ENCODE measurements at regions of chr12 and their contacts with region 1.

Region 1: DNA sequence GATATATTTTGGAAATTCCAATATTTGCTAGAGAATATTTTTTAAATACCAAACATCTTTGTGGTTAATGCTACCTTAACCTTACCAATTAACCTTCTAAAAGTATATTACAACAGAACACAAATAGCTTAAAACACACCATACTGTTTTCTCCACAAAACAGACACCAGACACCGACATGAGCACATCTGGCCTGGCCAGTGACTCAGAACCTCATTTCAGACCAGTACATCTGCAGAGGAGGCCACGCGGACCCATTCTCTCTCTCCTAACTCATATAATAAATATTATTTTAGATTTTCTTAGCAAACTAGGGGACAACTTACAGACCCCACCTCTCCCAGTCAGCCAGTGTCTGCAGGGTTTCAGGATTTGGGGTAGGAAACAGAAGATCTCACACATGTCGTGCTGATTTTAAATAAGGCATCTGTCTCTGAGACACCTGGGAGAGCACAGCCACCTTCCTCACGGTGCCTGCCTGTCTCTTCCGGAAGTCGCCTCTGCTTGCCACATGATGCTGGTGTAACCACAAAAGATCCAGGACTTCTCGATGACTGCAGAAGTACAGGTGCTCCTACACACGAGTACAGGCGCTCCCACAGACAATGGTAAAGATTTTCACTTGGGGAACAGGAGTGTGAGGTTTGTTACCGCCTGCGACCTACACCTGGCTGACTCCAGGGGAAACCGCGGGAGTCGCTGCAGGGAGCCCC is 9.7 kb upstream of the ANKLE2 start:
- DNase-seq: peak; percentile 62
- ATAC-seq: peak; percentile 64
- H3K4me3 Mint-ChIP-seq: peak overlapping the region; percentile 32
- H3K27ac Mint-ChIP-seq: peak overlapping the region; percentile 78
- H3K4me1 Mint-ChIP-seq: peaks cover 52% of the 10 kb centered on the region
- H3K27me3 Mint-ChIP-seq: no peaks in the 10 kb centered on the region
- CTCF ChIP-seq: no peak

Region 2: DNA sequence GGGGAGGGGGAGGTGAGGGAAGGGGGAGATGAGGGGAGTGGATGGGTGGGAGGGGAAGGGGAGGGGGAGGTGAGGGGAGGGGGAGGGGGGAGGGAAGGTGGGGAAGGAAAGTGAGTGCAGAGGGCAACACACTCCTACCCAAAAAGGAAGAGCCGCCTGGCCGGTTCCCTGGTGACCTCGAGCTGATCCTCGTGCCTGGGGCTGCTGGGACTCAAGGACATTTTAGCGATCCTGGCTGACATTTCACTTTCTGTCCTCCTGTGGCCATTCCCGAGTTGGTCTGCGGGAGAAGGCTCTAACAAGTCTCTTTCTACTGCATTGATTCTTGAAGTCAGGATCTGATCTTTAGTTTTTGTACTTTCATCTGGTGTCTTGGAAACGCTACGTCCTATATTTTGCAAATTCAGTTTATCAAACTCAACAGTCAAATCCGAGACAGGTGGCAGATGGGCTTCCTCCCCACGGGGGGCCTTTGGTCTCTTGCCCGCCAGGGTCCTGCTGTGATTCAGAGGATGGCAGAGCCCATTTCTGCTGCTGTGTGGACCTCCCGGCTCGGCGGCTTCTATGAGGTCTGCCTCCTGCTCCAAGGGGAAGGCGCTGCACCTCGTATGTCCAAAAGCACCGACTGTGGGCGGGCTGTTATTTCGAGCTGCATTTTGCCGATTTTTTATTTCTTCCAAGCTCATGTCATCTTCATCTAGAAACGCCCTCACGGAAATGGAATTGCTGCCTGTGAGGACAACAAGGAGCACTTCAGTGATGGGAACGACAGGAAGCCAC is 41.6 kb before region 1 on chr12:
- CTCF ChIA-PET with region 1: no interaction called
- POLR2A ChIA-PET with region 1: no interaction called
- intact Hi-C with region 1: no loop called
- DNase-seq: no peak
- ATAC-seq: no peak
- H3K4me3 Mint-ChIP-seq: no peak overlapping the region
- H3K27ac Mint-ChIP-seq: no peak overlapping the region
- H3K4me1 Mint-ChIP-seq: no peaks in the 10 kb centered on the region
- H3K27me3 Mint-ChIP-seq: no peaks in the 10 kb centered on the region
- CTCF ChIP-seq: no peak

Region 3: DNA sequence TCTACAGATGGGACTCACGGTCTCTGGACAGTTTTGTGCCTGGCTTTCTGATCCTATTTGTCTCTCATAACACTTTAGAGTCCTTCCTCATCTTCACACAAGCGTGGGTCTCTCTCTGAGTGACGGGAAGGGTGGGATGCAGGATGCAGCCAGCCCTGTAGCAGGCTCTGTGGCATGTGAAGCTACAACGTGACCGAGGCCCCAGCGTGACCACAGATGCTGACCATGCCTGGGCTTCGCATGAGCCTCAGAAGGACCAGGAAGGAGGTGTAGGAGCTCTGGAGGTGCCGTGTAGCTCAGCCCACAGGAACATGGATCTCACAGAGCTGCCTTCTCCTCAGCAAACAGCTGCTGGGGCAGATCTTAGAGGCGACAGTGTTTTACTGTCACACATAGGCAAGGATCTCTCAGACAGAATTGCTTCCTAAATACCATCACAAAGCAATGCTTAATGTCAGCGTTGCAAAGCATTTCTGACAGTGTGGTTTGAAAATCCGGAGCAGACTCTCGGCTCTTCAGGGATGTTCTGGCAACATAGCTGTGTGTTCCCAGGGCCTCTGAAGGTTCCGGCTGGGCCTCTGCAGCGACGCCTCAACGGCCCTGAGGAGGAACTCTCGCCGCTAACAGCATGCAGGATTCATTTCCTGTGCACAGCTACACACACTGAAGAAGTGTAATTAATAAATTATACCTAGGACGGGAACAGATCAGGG is 31.5 kb before region 1 on chr12:
- CTCF ChIA-PET with region 1: no interaction called
- POLR2A ChIA-PET with region 1: no interaction called
- intact Hi-C with region 1: no loop called
- DNase-seq: no peak
- ATAC-seq: no peak
- H3K4me3 Mint-ChIP-seq: no peak overlapping the region
- H3K27ac Mint-ChIP-seq: peak overlapping the region; percentile 24
- H3K4me1 Mint-ChIP-seq: peaks cover 5% of the 10 kb centered on the region
- H3K27me3 Mint-ChIP-seq: no peaks in the 10 kb centered on the region
- CTCF ChIP-seq: no peak

Region 4: GRCh38 chr12:132761032-132761920 is 10.0 kb before region 1 on chr12 and contains the start of gene ANKLE2:
- CTCF ChIA-PET with region 1: interaction called, 8 read pairs
- POLR2A ChIA-PET with region 1: interaction called, 12 read pairs
- intact Hi-C with region 1: no loop called
- DNase-seq: peak; percentile 86
- ATAC-seq: peak; percentile 49
- H3K4me3 Mint-ChIP-seq: peak within 1 kb of the TSS; percentile 90
- H3K27ac Mint-ChIP-seq: peak within 1 kb of the TSS; percentile 99
- H3K4me1 Mint-ChIP-seq: peaks cover 25% of the 10 kb centered on the region
- H3K27me3 Mint-ChIP-seq: no peaks in the 10 kb centered on the region
- CTCF ChIP-seq: no peak
- total RNA-seq, gene ANKLE2: 103 to 108 TPM

Region 5: GRCh38 chr12:132807295-132808092 is 36.2 kb after region 1 on chr12:
- CTCF ChIA-PET with region 1: interaction called, 15 read pairs
- POLR2A ChIA-PET with region 1: no interaction called
- intact Hi-C with region 1: no loop called
- DNase-seq: no peak
- ATAC-seq: peak; percentile 24
- H3K4me3 Mint-ChIP-seq: no peak overlapping the region
- H3K27ac Mint-ChIP-seq: peak overlapping the region; percentile 46
- H3K4me1 Mint-ChIP-seq: peaks cover 41% of the 10 kb centered on the region
- H3K27me3 Mint-ChIP-seq: no peaks in the 10 kb centered on the region
- CTCF ChIP-seq: no peak

Region 6: GRCh38 chr12:132908145-132909044 is 137.1 kb after region 1 on chr12:
- CTCF ChIA-PET with region 1: interaction called, 25 read pairs
- POLR2A ChIA-PET with region 1: no interaction called
- intact Hi-C with region 1: no loop called
- DNase-seq: peak; percentile 98
- ATAC-seq: peak; percentile 91
- H3K4me3 Mint-ChIP-seq: peak overlapping the region; percentile 79
- H3K27ac Mint-ChIP-seq: peak overlapping the region; percentile 86
- H3K4me1 Mint-ChIP-seq: peaks cover 13% of the 10 kb centered on the region
- H3K27me3 Mint-ChIP-seq: peaks cover 6% of the 10 kb centered on the region
- CTCF ChIP-seq: no peak

Measured in activated CD8-positive, alpha-beta T cell treated with anti-CD3 and anti-CD28 coated beads for 36 hours (primary cell).